AG04450 (cell line): ENCODE measurements at regions of chr5 and their contacts with region 1.

Region 1: DNA sequence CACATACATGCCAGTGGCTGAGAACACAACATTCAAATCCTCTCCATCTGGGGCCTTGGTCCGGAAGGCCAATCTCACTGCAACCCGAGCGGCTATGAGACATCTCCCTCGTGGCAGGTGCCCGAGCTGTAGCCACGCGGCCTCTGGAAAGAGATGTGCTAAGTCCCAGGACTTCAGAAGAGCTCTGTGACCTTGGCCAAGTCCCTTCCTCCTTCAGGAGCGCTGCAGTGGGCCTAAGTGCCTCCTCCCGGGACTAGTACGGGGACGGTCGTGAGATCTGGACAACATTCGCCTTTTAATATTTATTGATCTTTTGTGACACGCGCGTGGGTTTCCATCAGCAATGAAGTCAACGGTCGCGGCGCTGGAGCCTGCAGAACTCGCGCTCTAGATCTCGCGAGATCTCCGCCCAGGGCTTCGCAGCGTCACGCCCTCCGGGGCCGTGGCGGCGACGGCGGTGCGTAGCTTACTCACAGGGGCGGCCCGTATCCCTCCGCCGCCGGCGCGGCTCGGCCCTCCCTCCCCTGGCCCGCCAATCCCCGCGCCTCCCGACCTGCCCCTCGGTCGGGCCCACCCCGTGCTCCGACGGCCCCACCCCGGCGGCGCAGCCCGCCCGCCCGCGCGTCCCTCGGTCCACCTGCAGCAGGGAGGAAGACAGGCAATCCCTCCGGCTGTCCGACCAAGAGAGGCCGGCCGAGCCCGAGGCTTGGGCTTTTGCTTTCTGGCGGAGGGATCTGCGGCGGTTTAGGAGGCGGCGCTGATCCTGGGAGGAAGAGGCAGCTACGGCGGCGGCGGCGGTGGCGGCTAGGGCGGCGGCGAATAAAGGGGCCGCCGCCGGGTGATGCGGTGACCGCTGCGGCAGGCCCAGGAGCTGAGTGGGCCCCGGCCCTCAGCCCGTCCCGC is at the start of gene UBE2D2:
- DNase-seq: peak; percentile 97
- H3K4me3 ChIP-seq: peak within 1 kb of the TSS; percentile 88
- H3K27ac ChIP-seq: peak within 1 kb of the TSS; percentile 77
- H3K27me3 ChIP-seq: no peaks in the 10 kb centered on the region
- CTCF ChIP-seq: no peak
- polyA plus RNA-seq, gene UBE2D2: 51.5 and 60.9 TPM in 2 replicates

Region 2: GRCh38 chr5:139193928-139194327 is 367.1 kb before region 1 on chr5:
- CTCF ChIA-PET with region 1: no interaction called
- POLR2A ChIA-PET with region 1: interaction called, 13 read pairs
- DNase-seq: no peak
- H3K4me3 ChIP-seq: no peak overlapping the region
- H3K27ac ChIP-seq: no peak overlapping the region
- H3K27me3 ChIP-seq: no peaks in the 10 kb centered on the region
- CTCF ChIP-seq: peak; percentile 30; the same call in 1 of the 2 replicates

Region 3: DNA sequence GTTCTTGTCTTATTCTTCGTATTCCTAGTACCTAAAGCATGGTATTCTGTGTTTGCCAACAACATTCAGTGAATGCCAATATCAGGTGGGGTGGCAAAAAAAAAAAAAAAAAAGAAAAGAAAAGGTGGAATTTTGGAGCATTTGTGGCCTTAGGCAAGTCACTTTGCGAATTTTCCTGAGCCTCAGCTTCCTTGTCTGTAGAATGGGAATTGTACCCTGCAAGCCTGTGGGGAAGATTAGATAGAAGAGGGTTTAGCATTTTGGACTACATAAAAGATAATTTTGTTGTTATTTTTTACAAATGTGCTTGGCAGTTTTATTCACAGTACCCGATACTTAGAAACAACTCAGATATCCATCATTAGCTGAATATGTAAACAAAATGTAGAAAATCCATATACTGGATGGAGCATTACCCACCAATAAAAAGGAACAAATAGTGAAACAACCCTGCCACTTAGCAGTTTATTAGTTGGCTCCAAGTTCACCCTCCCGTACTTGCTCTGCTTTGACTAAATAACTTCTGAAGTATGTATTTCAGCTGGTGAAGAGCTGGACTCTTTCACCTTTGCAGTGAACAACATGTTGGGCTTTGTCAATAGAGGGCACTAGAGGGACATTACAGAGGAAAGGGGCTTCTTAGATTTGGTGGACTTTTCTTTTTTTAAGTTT is 13.8 kb after region 1 on chr5:
- CTCF ChIA-PET with region 1: interaction called, 16 read pairs
- POLR2A ChIA-PET with region 1: interaction called, 8 read pairs
- DNase-seq: no peak
- H3K4me3 ChIP-seq: no peak overlapping the region
- H3K27ac ChIP-seq: no peak overlapping the region
- H3K27me3 ChIP-seq: no peaks in the 10 kb centered on the region
- CTCF ChIP-seq: peak; percentile 81

Region 4: GRCh38 chr5:139828207-139828895 is 267.3 kb after region 1 on chr5:
- CTCF ChIA-PET with region 1: no interaction called
- POLR2A ChIA-PET with region 1: no interaction called
- DNase-seq: no peak
- H3K4me3 ChIP-seq: no peak overlapping the region
- H3K27ac ChIP-seq: no peak overlapping the region
- H3K27me3 ChIP-seq: peaks cover 20% of the 10 kb centered on the region
- CTCF ChIP-seq: no peak